ENCODE measurements at regions of chr1 and their contacts with region 1.

Region 1: DNA sequence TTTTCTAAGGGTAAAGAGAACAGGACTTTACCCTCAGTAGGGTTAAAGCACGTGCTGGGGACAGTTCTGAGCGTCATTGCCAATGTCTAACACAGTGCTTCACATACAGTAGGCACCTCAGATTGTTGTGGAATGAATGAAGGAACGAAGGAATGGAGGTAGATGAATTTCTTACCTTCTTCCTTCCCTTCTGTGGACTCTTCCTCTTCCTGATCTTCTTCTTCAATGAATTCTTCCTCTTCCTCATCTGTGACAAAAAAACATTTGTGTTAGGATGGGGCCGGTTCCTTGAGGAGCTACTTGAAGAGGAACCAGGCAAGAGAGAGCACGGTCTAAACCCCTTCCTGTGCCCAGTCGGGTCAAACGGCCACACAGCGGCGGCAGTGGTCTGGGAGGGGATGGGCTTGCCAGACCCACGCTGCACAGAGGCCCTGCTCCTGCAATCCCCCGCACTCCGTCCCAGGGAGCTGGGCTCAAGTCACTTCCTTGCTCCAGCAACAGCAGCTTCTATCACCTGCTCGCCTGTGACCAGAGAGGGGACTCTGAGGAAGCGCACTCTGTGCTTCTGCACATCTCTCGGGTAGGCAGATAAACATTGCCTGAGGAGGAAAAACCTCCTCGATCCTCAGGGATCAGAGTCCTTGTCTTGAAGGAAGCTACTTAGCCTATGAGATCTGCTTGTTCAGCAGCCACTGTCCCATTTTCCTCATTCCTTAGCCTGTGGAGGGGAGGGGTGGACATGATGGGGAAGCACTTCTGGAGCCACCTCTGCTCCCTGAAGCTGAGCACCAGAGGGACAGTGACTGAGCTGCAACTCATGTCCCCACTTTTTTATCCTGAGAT is 8.0 kb upstream of the SLC30A2 start:
- DNase-seq: no peak
- H3K4me3 ChIP-seq: no peak overlapping the region
- H3K27ac ChIP-seq: no peak overlapping the region
- H3K4me1 ChIP-seq: peaks cover 10% of the 10 kb centered on the region; the same call in 1 of the 2 replicates
- H3K27me3 ChIP-seq: no peaks in the 10 kb centered on the region
- CTCF ChIP-seq: no peak

Region 2: DNA sequence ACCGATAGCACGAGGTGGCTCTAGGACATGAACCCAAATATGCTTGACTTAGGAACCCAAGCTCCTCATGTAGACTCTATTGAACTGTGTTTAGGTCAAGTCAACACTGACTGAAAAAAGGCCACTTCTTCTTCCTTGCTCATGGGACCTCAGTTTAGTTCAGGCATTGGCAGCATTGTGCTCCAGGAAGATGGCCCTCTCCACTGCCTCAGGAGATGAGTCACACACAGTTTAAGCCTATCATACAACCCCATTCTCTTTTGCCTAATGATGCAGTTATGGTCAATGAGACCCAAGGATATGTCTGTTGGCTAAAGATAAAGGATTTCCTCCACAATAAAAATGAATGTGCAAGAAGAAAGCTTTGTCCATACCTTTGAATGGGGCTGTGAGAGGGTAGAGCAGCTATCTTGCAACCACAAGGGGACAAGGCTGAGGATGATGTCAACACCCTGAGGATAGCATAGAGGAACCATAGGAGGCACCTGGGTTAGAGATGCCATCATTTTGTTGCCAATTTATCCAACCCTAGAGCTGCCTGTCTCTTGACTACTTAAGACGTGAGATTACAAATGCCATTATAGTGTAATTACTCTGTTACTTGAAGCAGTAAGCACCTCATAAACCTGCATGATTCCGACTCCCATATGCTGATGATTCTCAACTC is 16.5 kb after region 1 on chr1:
- CTCF ChIA-PET with region 1: interaction called, 16 read pairs
- POLR2A ChIA-PET with region 1: no interaction called
- intact Hi-C with region 1: no loop called
- DNase-seq: no peak
- H3K4me3 ChIP-seq: no peak overlapping the region
- H3K27ac ChIP-seq: no peak overlapping the region
- H3K4me1 ChIP-seq: no peaks in the 10 kb centered on the region; the same call in 1 of the 2 replicates
- H3K27me3 ChIP-seq: no peaks in the 10 kb centered on the region
- CTCF ChIP-seq: no peak

Region 3: GRCh38 chr1:26083246-26083645 is 29.3 kb after region 1 on chr1:
- CTCF ChIA-PET with region 1: no interaction called
- POLR2A ChIA-PET with region 1: interaction called, 10 read pairs
- intact Hi-C with region 1: no loop called
- DNase-seq: peak in 1 of 2 experiments; percentile 85
- H3K4me3 ChIP-seq: 0 out of 2 replicates have a peak overlapping the region, but pooled peaks have one; percentile 10
- H3K27ac ChIP-seq: peak overlapping the region; percentile 38
- H3K4me1 ChIP-seq: peaks cover 47% of the 10 kb centered on the region
- H3K27me3 ChIP-seq: no peaks in the 10 kb centered on the region
- CTCF ChIP-seq: no peak

Region 4: GRCh38 chr1:26259578-26259977 is 205.6 kb after region 1 on chr1:
- CTCF ChIA-PET with region 1: no interaction called
- POLR2A ChIA-PET with region 1: no interaction called
- intact Hi-C with region 1: no loop called
- DNase-seq: no peak
- H3K4me3 ChIP-seq: no peak overlapping the region
- H3K27ac ChIP-seq: no peak overlapping the region
- H3K4me1 ChIP-seq: no peaks in the 10 kb centered on the region
- H3K27me3 ChIP-seq: no peaks in the 10 kb centered on the region
- CTCF ChIP-seq: no peak

Measured in PC-9 (cell line).